ENCODE measurements at regions of chr1 and their contacts with region 1.

Region 1: DNA sequence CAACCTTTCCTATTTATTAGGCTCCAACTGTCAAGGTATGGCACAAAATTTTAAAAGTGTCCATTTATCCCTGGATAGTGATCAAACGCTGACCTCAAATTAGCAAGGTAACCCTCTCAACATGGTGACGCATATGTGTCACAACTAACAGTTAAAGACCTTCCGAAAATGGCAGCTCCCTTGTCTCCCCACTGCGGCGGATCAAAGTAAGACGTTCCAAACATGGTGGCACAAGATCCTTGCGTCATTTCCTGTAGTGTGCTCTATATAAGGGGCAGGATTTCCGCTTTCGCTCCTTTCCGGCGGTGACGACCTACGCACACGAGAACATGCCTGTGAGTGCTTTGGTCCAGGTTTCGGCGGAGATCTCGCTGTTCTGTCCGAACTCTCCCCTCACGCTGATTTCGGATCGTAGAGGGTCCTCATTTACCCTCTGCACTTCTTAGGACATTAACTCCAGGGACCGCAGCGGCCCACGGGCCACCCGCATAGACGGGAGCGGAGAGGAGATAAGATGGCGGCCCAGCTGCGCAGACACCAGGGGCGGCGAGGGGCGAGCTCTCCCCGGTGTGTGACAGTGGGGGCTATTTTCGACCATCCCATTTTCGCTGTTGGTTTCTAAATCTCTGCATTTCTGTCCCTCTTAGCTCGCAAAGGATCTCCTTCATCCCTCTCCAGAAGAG is at the start of gene RPS27:
- DNase-seq: peak; percentile 73
- ATAC-seq: peak; percentile 80
- H3K4me3 Mint-ChIP-seq: peak within 1 kb of the TSS; percentile 98
- H3K27ac Mint-ChIP-seq: peak within 1 kb of the TSS; percentile 99
- H3K4me1 Mint-ChIP-seq: peaks cover 53% of the 10 kb centered on the region
- H3K27me3 Mint-ChIP-seq: no peaks in the 10 kb centered on the region
- CTCF ChIP-seq: no peak
- total RNA-seq, gene RPS27: 3,463 and 4,673 TPM in 2 replicates

Region 2: DNA sequence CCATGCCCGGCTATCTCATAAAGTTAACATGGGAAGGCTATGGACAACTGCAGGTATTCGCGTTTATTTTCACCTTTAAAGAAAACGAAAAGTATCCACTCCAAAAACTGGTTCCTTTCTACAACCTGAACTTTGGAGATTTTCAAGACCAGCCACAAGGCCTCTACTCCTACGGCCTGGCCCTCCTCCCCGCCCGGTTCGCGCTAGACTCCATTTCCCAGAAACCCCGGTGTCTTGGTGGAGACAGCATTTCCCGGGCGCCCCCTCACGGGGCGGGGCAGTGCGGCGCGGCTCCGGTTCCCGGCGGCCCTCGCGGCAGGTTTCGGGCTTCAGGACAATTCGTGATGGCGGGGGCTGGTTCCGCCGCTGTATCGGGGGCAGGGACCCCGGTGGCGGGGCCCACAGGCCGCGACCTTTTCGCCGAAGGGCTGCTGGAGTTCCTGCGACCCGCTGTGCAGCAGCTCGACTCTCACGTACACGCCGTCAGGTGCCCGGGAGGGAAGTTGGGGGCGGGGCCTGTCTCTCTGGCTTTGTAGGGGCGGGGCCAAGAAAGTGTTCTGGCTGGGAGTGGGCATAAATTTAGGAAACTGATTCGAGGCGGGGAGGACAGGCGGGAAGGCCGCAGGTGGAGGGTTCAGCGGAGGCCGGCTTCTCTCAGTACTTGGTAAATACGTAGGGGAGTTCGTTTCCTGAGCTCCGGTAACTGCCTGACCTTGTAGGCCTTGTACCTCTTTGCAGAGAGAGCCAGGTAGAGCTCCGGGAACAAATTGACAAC is 332.0 kb before region 1 on chr1 and contains the start of gene SNAPIN:
- CTCF ChIA-PET with region 1: no interaction called
- POLR2A ChIA-PET with region 1: interaction called, 16 read pairs
- intact Hi-C with region 1: no loop called
- DNase-seq: peak; percentile 94
- ATAC-seq: peak; percentile 99
- H3K4me3 Mint-ChIP-seq: peak within 1 kb of the TSS; percentile 96
- H3K27ac Mint-ChIP-seq: peak within 1 kb of the TSS; percentile 91
- H3K4me1 Mint-ChIP-seq: peaks cover 14% of the 10 kb centered on the region
- H3K27me3 Mint-ChIP-seq: no peaks in the 10 kb centered on the region
- CTCF ChIP-seq: no peak
- total RNA-seq, gene SNAPIN: 50.4 and 51.5 TPM in 2 replicates

Region 3: GRCh38 chr1:153775458-153776327 is 214.9 kb before region 1 on chr1:
- CTCF ChIA-PET with region 1: interaction called, 3 read pairs
- POLR2A ChIA-PET with region 1: interaction called, 13 read pairs
- intact Hi-C with region 1: no loop called
- DNase-seq: peak; percentile 50
- ATAC-seq: peak; percentile 71
- H3K4me3 Mint-ChIP-seq: peak overlapping the region; percentile 86
- H3K27ac Mint-ChIP-seq: peak overlapping the region; percentile 75
- H3K4me1 Mint-ChIP-seq: peaks cover 31% of the 10 kb centered on the region
- H3K27me3 Mint-ChIP-seq: no peaks in the 10 kb centered on the region
- CTCF ChIP-seq: no peak

Region 4: GRCh38 chr1:153816283-153816889 is 174.2 kb before region 1 on chr1:
- CTCF ChIA-PET with region 1: interaction called, 49 read pairs
- POLR2A ChIA-PET with region 1: interaction called, 10 read pairs
- intact Hi-C with region 1: loop called (anchors 1 kb)
- DNase-seq: no peak
- ATAC-seq: no peak
- H3K4me3 Mint-ChIP-seq: no peak overlapping the region
- H3K27ac Mint-ChIP-seq: no peak overlapping the region
- H3K4me1 Mint-ChIP-seq: peaks cover 3% of the 10 kb centered on the region
- H3K27me3 Mint-ChIP-seq: no peaks in the 10 kb centered on the region
- CTCF ChIP-seq: no peak

Region 5: DNA sequence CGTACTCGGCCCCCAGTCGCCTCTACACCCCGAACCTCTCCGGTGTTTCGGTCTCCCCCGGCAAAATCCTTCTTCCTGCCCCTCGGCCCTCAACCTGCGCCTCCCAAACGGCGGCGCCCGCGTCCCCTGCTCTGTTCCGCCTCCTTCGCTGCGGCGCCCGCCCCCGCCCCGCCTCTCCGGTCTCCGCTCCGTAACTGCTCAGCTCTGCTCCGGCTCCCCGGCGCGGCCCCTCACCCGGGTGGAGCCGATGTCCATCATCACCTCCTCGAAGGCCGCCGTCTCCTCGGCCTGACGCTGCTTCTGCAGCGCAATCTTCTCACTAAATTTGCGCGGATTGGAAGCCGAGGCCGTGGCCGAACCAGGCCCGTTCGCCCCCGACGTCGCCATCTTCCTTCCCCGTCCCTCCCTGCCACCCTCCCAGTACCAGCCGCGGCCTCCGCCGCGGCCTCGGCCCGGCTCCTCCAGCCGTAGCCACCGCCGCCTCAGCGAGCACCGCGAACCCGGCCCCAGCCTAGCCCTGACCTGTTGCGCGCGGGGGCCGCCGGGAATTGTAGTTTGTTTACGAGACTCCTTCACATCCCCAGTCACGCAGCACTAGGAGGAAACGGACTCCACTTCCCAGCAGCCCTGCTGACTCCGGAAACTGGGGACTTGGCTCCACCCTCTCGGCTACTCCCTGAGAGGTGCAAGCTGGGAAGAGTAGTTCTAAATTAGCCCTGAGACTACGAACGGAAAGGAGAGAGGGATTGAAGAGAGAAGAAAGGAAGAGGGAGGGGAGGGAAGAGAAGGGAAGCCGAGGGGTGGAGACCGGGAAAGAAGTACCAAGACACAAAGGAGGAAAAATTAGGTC is 32.3 kb before region 1 on chr1 and contains the start of gene CRTC2:
- CTCF ChIA-PET with region 1: interaction called, 12 read pairs
- POLR2A ChIA-PET with region 1: interaction called, 40 read pairs
- intact Hi-C with region 1: loop called (anchors 1 kb)
- DNase-seq: peak; percentile 92
- ATAC-seq: peak; percentile 83
- H3K4me3 Mint-ChIP-seq: peak within 1 kb of the TSS; percentile 96
- H3K27ac Mint-ChIP-seq: peak within 1 kb of the TSS; percentile 96
- H3K4me1 Mint-ChIP-seq: peaks cover 77% of the 10 kb centered on the region
- H3K27me3 Mint-ChIP-seq: no peaks in the 10 kb centered on the region
- CTCF ChIP-seq: no peak
- total RNA-seq, gene CRTC2: 206 and 247 TPM in 2 replicates

Region 6: DNA sequence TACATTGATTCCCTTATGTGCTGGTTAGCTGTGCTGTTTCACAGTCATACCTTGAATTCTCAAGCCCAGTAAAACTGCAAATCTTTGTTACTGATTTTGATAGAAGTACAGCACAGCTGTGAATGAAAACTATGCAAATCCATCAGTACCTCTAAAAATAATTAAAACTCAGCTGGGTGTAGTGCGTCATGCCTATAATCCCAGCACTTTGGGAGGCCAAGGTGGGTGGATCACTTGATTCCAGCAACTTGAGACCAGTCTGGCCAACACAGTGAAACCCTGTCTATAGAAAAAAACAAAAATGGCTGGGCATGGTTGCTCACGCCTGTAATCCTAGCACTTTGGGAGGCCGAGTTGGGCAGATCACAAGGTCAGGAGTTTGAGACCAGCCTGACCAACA is 103.1 kb after region 1 on chr1:
- CTCF ChIA-PET with region 1: no interaction called
- POLR2A ChIA-PET with region 1: no interaction called
- intact Hi-C with region 1: no loop called
- DNase-seq: no peak
- ATAC-seq: no peak
- H3K4me3 Mint-ChIP-seq: no peak overlapping the region
- H3K27ac Mint-ChIP-seq: no peak overlapping the region
- H3K4me1 Mint-ChIP-seq: no peaks in the 10 kb centered on the region
- H3K27me3 Mint-ChIP-seq: no peaks in the 10 kb centered on the region
- CTCF ChIP-seq: no peak

Region 7: DNA sequence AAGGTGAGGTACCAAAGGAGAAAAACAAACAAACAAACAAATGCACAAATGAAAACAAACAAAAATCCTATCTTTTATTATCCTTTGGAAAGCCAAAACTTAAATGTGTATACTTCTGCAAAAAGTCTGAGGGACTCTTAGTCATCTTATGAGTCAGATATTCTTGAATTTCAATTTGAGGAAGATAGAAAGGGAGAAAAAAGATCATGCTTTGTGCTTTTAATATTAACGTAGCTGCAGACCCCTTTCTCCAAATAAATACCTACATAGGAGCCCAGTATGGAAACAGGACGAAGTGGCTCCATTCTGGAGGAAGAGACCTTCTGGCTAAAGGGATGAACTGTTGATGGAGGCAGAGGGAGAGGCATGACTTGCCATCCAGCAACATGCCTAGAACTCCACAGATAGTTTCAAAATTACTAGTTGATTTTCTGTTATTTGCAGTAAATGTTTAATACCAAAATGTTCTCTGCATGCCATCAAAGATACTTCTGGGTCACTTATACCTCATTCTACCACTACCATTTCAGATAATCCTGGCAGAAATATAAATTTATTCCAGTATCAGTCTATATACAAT is 138.9 kb after region 1 on chr1:
- CTCF ChIA-PET with region 1: no interaction called
- POLR2A ChIA-PET with region 1: no interaction called
- intact Hi-C with region 1: no loop called
- DNase-seq: no peak
- ATAC-seq: no peak
- H3K4me3 Mint-ChIP-seq: no peak overlapping the region
- H3K27ac Mint-ChIP-seq: no peak overlapping the region
- H3K4me1 Mint-ChIP-seq: no peaks in the 10 kb centered on the region
- H3K27me3 Mint-ChIP-seq: no peaks in the 10 kb centered on the region
- CTCF ChIP-seq: no peak

Region 8: DNA sequence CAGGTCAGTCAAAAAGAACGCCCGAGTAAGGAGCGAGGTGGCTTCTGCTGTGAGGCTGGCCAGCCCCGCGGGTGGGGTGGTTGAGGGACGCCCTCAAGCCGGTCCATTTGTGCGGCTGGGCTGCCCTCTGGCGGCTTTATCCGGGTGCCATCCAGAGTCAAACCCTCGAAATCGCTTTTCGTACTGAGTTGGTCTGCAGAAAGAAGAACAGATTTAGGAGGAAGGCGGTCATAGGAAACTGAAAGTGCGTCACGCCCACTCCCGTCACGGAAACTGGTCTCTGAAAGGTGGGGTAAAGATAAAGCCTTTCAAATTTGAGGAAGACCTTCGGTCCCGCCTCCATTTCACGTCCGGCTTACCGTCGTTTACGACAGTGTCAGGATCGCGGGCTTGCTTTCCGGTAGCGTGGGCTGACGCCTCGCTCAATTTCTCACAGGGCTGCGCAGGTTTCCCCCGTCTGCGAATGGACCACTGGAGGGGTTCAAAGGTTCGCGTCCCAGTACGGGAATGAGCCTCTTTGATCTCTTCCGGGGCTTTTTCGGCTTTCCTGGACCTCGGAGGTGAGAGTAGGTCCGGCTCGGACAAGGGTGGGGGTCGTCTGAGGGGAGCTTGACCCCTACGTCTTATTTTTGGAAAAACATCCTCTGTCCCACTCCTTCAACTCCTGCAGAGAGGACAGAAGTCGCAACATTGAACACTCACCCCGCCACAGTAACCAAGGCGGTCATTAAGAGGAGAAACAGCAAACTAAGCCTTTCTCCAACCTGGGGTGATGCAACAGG is 281.8 kb after region 1 on chr1 and contains the start of gene HAX1:
- CTCF ChIA-PET with region 1: no interaction called
- POLR2A ChIA-PET with region 1: interaction called, 14 read pairs
- intact Hi-C with region 1: loop called (anchors 1 kb)
- DNase-seq: peak; percentile 88
- ATAC-seq: peak; percentile 93
- H3K4me3 Mint-ChIP-seq: peak within 1 kb of the TSS; percentile 96
- H3K27ac Mint-ChIP-seq: peak within 1 kb of the TSS; percentile 97
- H3K4me1 Mint-ChIP-seq: peaks cover 39% of the 10 kb centered on the region
- H3K27me3 Mint-ChIP-seq: no peaks in the 10 kb centered on the region
- CTCF ChIP-seq: peak; percentile 46
- total RNA-seq, gene HAX1: 89.4 and 93.0 TPM in 2 replicates

Measured in activated B cell treated with CpG ODN at 0.5 μM for 24 hours (primary cell).